ENCODE measurements at regions of chr21 and their contacts with region 1.

Region 1: DNA sequence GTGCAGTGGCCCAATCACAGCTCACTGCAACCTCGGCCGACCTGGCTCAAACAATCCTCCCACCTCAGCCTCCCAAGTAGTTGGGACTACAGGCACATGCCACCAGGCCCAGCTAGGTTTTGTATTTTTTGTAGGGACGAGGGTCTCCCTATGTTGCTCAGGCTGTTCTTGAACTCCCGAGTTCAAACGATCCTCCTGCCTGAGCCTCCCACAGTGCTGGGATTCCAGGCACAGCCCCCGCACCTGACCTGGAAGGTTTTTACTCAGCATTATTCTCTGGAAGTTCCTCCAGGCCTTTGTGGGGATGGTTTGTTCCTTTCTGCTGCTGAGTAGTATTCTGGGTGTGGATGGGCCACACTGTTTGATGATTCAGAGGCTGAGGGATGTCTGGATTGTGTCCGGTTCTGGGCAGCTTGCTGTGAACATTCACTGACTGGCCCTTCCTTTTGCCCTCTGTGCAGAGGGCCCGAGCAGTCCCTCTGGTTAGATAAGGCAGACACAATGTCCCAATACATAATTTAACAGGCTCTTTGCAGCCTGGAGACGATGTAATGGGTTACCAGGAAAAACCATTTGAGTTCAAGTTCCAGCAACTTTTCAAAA is 6.0 kb upstream of the TRAPPC10 start:
- DNase-seq: peak in 1 of 2 donors; percentile 28
- ATAC-seq: peak; percentile 56 to 89 (median 82)
- H3K4me3 ChIP-seq: no peak overlapping the region
- H3K27ac ChIP-seq: peak overlapping the region in 9 of 10 donors; percentile 63 to 79 (median 75)
- H3K4me1 ChIP-seq: peaks cover 0 to 13% (median 4%) of the 10 kb centered on the region in 9 donors
- H3K27me3 ChIP-seq: no peaks in the 10 kb centered on the region
- CTCF ChIP-seq: no peak

Region 2: DNA sequence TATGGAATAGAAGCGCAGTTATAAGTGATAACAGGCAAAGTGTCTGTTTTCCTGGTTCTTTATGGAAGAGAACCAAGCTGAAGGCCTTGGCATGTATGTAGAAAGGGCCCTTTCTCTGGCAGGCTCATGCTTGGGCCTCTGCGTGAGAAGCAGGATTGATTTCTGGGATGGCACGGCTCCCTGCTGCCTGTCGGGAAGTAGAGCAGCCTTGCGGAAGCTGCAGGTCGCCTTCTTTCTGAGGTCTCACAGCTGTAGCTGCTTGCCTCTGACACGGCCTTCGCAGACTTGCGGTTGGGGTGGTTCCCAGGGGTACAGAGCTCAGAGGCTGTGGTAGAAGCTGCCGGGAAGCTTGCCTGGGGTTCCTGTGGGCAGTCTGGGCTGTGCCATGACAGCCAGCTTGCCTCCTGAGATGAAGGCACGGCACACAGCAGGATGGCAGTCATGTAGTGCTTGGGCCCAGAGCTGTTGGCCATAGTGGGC is 45.4 kb after region 1 on chr21:
- intact Hi-C with region 1: loop called in 1 of 10 experiments (anchors 10 kb)
- DNase-seq: peak; percentile 34 to 51
- ATAC-seq: peak; percentile 52 to 79 (median 70)
- H3K4me3 ChIP-seq: no peak overlapping the region
- H3K27ac ChIP-seq: peak overlapping the region; percentile 21 to 78 (median 58)
- H3K4me1 ChIP-seq: peaks cover 8 to 54% (median 26%) of the 10 kb centered on the region in 9 donors
- H3K27me3 ChIP-seq: no peaks in the 10 kb centered on the region
- CTCF ChIP-seq: no peak

Region 3: GRCh38 chr21:44310628-44311511 is 304.8 kb after region 1 on chr21:
- intact Hi-C with region 1: loop called in 2 of 10 experiments (anchors 10 kb)
- DNase-seq: no peak
- ATAC-seq: no peak
- H3K4me3 ChIP-seq: no peak overlapping the region
- H3K27ac ChIP-seq: no peak overlapping the region
- H3K4me1 ChIP-seq: peaks cover 0 to 11% (median 1%) of the 10 kb centered on the region in 9 donors
- H3K27me3 ChIP-seq: no peaks in the 10 kb centered on the region
- CTCF ChIP-seq: no peak